Calu3 (cell line): ENCODE measurements at regions of chr1 and their contacts with region 1.

Region 1: GRCh38 chr1:51569284-51570062 is 47.4 kb upstream of the OSBPL9 start:
- DNase-seq: peak; percentile 78
- H3K4me3 Mint-ChIP-seq: no peak overlapping the region
- H3K27ac Mint-ChIP-seq: peak overlapping the region; percentile 89
- H3K4me1 Mint-ChIP-seq: peaks cover 37% of the 10 kb centered on the region
- H3K27me3 Mint-ChIP-seq: no peaks in the 10 kb centered on the region
- CTCF ChIP-seq: peak; percentile 20

Region 2: GRCh38 chr1:51519048-51519864 is 50.2 kb before region 1 on chr1 and contains the start of gene EPS15:
- CTCF ChIA-PET with region 1: no interaction called
- intact Hi-C with region 1: loop called (anchors 5 kb)
- DNase-seq: peak; percentile 85
- H3K4me3 Mint-ChIP-seq: peak within 1 kb of the TSS; percentile 91
- H3K27ac Mint-ChIP-seq: peak within 1 kb of the TSS; percentile 92
- H3K4me1 Mint-ChIP-seq: peaks cover 33% of the 10 kb centered on the region
- H3K27me3 Mint-ChIP-seq: no peaks in the 10 kb centered on the region
- CTCF ChIP-seq: no peak
- total RNA-seq, gene EPS15: 50.0 and 51.2 TPM in 2 replicates

Region 3: DNA sequence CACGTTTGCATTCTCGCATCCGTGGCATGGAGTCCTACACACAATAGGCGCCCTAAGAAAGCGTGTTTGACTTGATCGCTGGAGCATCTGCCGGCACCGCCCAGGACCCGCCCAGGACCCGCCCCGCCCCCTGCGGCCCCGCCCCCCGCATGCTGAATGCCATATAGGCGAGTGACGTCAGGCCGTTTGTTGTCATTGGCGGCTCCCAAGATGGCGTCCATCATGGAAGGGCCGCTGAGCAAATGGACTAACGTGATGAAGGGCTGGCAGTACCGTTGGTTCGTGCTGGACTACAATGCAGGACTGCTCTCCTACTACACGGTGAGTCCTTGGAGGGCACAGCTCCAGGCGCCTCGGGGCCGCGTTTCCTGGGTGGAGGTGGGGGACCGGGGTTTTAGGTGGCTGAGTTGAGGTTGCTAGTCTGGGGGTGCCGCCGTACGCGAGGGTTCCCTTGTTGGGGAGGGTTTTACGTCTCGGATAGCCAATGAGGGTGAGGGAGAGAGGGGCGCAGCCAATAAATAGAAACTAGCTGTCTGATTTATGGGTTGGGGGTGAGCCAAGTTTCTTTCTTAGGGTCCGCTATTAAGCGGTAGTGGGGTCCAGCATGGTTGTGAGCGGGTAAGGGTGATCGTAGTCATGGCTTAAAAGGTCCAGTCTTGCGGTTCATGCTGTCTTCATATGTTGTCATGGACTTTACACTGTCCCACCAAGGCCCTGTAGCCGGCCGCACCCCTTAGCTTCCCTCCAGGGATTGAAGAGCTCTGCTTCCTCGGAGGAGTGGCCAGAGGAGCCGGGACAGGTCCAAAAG is 47.6 kb after region 1 on chr1 and contains the start of gene OSBPL9:
- CTCF ChIA-PET with region 1: interaction called, 5 read pairs
- intact Hi-C with region 1: loop called (anchors 5 kb)
- DNase-seq: peak; percentile 79
- H3K4me3 Mint-ChIP-seq: peak within 1 kb of the TSS; percentile 97
- H3K27ac Mint-ChIP-seq: peak within 1 kb of the TSS; percentile 98
- H3K4me1 Mint-ChIP-seq: peaks cover 55% of the 10 kb centered on the region
- H3K27me3 Mint-ChIP-seq: no peaks in the 10 kb centered on the region
- CTCF ChIP-seq: no peak
- total RNA-seq, gene OSBPL9: 64.4 and 67.6 TPM in 2 replicates

Region 4: GRCh38 chr1:51750218-51750617 is 180.7 kb after region 1 on chr1:
- CTCF ChIA-PET with region 1: no interaction called
- intact Hi-C with region 1: no loop called
- DNase-seq: no peak
- H3K4me3 Mint-ChIP-seq: no peak overlapping the region
- H3K27ac Mint-ChIP-seq: no peak overlapping the region
- H3K4me1 Mint-ChIP-seq: no peaks in the 10 kb centered on the region
- H3K27me3 Mint-ChIP-seq: no peaks in the 10 kb centered on the region
- CTCF ChIP-seq: no peak